B cell (primary cell): ENCODE measurements at regions of chr15 and their contacts with region 1.

Region 1: DNA sequence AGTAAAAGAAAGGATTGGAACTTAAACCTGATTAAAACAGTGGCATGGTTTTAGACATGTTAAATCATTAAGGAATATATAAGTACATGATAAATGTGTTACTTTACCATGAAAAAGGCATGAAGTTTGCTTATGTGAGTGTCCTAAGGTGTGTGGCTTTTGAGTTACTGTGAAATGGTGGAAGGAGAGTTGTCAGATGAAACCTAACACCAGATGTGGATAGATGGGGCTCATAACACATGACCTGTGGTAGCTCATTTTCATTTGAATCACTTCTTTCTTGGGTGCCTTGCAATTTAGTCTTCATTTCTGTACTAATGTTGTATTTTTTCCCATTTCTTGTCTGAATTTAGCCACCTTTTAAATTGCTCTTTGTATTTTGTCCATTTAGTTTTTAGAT is 13.0 kb downstream of the MEF2A start:
- DNase-seq: no peak
- ATAC-seq: peak; percentile 24
- H3K4me3 ChIP-seq: no peak overlapping the region
- H3K4me3 Mint-ChIP-seq: no peak overlapping the region
- H3K27ac ChIP-seq: no peak overlapping the region
- H3K27ac Mint-ChIP-seq: no peak overlapping the region
- H3K4me1 ChIP-seq: peaks cover 26 to 57% of the 10 kb centered on the region in 2 donors
- H3K4me1 Mint-ChIP-seq: peaks cover 76% of the 10 kb centered on the region
- H3K27me3 ChIP-seq: no peaks in the 10 kb centered on the region
- H3K27me3 Mint-ChIP-seq: no peaks in the 10 kb centered on the region
- CTCF ChIP-seq: no peak

Region 2: GRCh38 chr15:99343881-99344551 is 234.8 kb before region 1 on chr15:
- CTCF ChIA-PET with region 1: no interaction called
- POLR2A ChIA-PET with region 1: no interaction called
- intact Hi-C with region 1: loop called (anchors 5 kb)
- DNase-seq: peak; percentile 51
- ATAC-seq: peak; percentile 69
- H3K4me3 ChIP-seq: no peak overlapping the region
- H3K4me3 Mint-ChIP-seq: no peak overlapping the region
- H3K27ac ChIP-seq: no peak overlapping the region
- H3K27ac Mint-ChIP-seq: no peak overlapping the region
- H3K4me1 ChIP-seq: peaks cover 20 to 22% of the 10 kb centered on the region in 2 donors
- H3K4me1 Mint-ChIP-seq: peaks cover 26% of the 10 kb centered on the region
- H3K27me3 ChIP-seq: no peaks in the 10 kb centered on the region
- H3K27me3 Mint-ChIP-seq: no peaks in the 10 kb centered on the region
- CTCF ChIP-seq: peak; percentile 49

Region 3: GRCh38 chr15:99514306-99514705 is 64.5 kb before region 1 on chr15:
- CTCF ChIA-PET with region 1: no interaction called
- POLR2A ChIA-PET with region 1: no interaction called
- intact Hi-C with region 1: no loop called
- DNase-seq: peak; percentile 41
- ATAC-seq: no peak
- H3K4me3 ChIP-seq: no peak overlapping the region
- H3K4me3 Mint-ChIP-seq: peak overlapping the region; percentile 62
- H3K27ac ChIP-seq: peak overlapping the region in 1 of 2 donors; percentile 90
- H3K27ac Mint-ChIP-seq: peak overlapping the region; percentile 97
- H3K4me1 ChIP-seq: peaks cover 61 to 65% of the 10 kb centered on the region in 2 donors
- H3K4me1 Mint-ChIP-seq: peaks cover 74% of the 10 kb centered on the region
- H3K27me3 ChIP-seq: no peaks in the 10 kb centered on the region
- H3K27me3 Mint-ChIP-seq: no peaks in the 10 kb centered on the region
- CTCF ChIP-seq: no peak

Region 4: GRCh38 chr15:99592145-99592791 is 13.5 kb after region 1 on chr15:
- CTCF ChIA-PET with region 1: interaction called, 6 read pairs
- POLR2A ChIA-PET with region 1: no interaction called
- intact Hi-C with region 1: loop called (anchors 2 kb)
- DNase-seq: no peak
- ATAC-seq: no peak
- H3K4me3 ChIP-seq: no peak overlapping the region
- H3K4me3 Mint-ChIP-seq: no peak overlapping the region
- H3K27ac ChIP-seq: no peak overlapping the region
- H3K27ac Mint-ChIP-seq: no peak overlapping the region
- H3K4me1 ChIP-seq: peaks cover 12 to 32% of the 10 kb centered on the region in 2 donors
- H3K4me1 Mint-ChIP-seq: peaks cover 60% of the 10 kb centered on the region
- H3K27me3 ChIP-seq: no peaks in the 10 kb centered on the region
- H3K27me3 Mint-ChIP-seq: no peaks in the 10 kb centered on the region
- CTCF ChIP-seq: no peak

Region 5: GRCh38 chr15:99613887-99614647 is 35.3 kb after region 1 on chr15:
- CTCF ChIA-PET with region 1: no interaction called
- POLR2A ChIA-PET with region 1: no interaction called
- intact Hi-C with region 1: loop called (anchors 5 kb)
- DNase-seq: no peak
- ATAC-seq: peak; percentile 37
- H3K4me3 ChIP-seq: no peak overlapping the region
- H3K4me3 Mint-ChIP-seq: peak overlapping the region; percentile 38
- H3K27ac ChIP-seq: peak overlapping the region; percentile 52 to 83
- H3K27ac Mint-ChIP-seq: peak overlapping the region; percentile 34
- H3K4me1 ChIP-seq: peaks cover 30 to 41% of the 10 kb centered on the region in 2 donors
- H3K4me1 Mint-ChIP-seq: peaks cover 64% of the 10 kb centered on the region
- H3K27me3 ChIP-seq: no peaks in the 10 kb centered on the region
- H3K27me3 Mint-ChIP-seq: no peaks in the 10 kb centered on the region
- CTCF ChIP-seq: no peak

Region 6: GRCh38 chr15:100558771-100559254 is 980.0 kb after region 1 on chr15:
- CTCF ChIA-PET with region 1: no interaction called
- POLR2A ChIA-PET with region 1: no interaction called
- intact Hi-C with region 1: no loop called
- DNase-seq: no peak
- ATAC-seq: no peak
- H3K4me3 ChIP-seq: no peak overlapping the region
- H3K4me3 Mint-ChIP-seq: no peak overlapping the region
- H3K27ac ChIP-seq: no peak overlapping the region
- H3K27ac Mint-ChIP-seq: no peak overlapping the region
- H3K4me1 ChIP-seq: no peaks in the 10 kb centered on the region
- H3K4me1 Mint-ChIP-seq: no peaks in the 10 kb centered on the region
- H3K27me3 ChIP-seq: no peaks in the 10 kb centered on the region
- H3K27me3 Mint-ChIP-seq: no peaks in the 10 kb centered on the region
- CTCF ChIP-seq: no peak

Region 7: DNA sequence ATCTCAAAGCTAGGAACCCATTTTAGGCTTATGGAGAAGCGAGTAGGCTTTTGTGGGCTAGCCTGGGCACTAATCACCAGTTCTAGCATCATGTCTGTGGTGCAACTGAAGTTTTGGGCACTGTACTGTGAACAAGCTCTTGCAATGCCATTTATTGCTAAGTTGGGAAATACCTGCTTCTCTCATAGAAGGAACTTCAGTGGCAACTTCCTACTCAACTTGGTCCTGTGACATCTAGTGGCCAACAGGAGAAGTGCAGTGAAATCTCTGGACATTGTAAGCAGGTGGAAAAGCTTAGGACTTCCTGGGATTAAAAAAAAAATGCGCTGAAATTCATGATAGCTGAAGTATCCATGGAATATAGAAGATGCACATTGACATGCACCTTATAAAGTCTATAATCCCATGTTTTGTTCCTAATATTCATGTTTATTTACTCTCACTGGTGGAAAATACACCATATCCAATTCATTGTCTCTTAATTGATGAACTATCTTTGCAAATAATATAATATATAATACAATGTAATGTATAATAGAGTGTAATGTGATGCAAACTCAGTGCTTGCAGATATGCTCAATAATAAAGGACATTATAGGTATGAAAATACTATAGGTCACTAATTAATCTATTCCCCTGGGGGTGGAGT is 1294.3 kb after region 1 on chr15:
- CTCF ChIA-PET with region 1: no interaction called
- POLR2A ChIA-PET with region 1: no interaction called
- intact Hi-C with region 1: no loop called
- DNase-seq: peak; percentile 73
- ATAC-seq: peak; percentile 80
- H3K4me3 ChIP-seq: no peak overlapping the region
- H3K4me3 Mint-ChIP-seq: no peak overlapping the region
- H3K27ac ChIP-seq: no peak overlapping the region
- H3K27ac Mint-ChIP-seq: no peak overlapping the region
- H3K4me1 ChIP-seq: no peaks in the 10 kb centered on the region
- H3K4me1 Mint-ChIP-seq: no peaks in the 10 kb centered on the region
- H3K27me3 ChIP-seq: peaks cover 0 to 25% (median 6%) of the 10 kb centered on the region in 4 experiments
- H3K27me3 Mint-ChIP-seq: peaks cover 30% of the 10 kb centered on the region
- CTCF ChIP-seq: peak; percentile 97